ENCODE measurements at regions of chr2 and their contacts with region 1.

Region 1: DNA sequence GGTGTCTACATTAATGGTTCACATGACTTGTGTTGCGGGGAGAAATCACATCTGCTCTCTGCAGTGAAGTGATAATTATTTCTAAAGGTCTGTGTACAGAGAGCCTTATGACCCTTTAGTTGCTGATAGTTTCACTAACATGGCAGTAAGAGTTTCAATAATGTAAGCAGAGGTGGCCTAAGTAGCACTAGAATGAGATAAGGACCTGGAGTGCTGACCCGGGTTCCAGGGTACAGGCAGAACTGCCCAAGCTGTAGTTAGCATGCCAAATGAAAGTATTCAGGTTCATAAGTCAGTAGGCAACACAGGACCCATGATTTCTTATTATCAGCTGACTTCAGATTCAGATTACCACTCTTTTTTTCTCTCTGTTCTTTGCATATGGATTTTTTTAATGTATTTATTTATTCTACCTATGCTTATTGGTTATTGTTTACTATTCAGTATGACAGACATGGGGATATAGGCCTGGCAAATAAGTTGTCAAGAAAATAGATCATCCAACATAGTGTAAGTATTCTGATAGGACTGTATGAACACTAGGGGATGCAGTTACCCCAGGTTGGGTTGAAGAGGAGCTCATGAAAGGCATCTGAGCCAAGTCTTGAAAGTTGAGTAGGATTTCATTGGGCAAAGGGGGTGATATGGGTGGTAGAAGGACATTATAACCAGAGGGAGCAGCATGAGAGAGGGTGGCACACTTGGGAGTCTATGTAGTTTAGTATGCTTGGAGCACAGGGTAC is 105.2 kb downstream of the CCDC85A start:
- DNase-seq: no peak
- ATAC-seq: peak; percentile 67
- H3K4me3 ChIP-seq: no peak overlapping the region
- H3K27ac ChIP-seq: no peak overlapping the region
- H3K4me1 ChIP-seq: no peaks in the 10 kb centered on the region
- H3K27me3 ChIP-seq: no peaks in the 10 kb centered on the region
- CTCF ChIP-seq: no peak

Region 2: GRCh38 chr2:56209701-56210100 is 79.3 kb before region 1 on chr2:
- intact Hi-C with region 1: loop called in 1 of 2 experiments (anchors 5 kb)
- DNase-seq: no peak
- ATAC-seq: no peak
- H3K4me3 ChIP-seq: no peak overlapping the region
- H3K27ac ChIP-seq: no peak overlapping the region
- H3K4me1 ChIP-seq: no peaks in the 10 kb centered on the region
- H3K27me3 ChIP-seq: no peaks in the 10 kb centered on the region
- CTCF ChIP-seq: no peak